Activated CD4-positive, alpha-beta T cell treated with anti-CD3 and anti-CD28 coated beads for 36 hours (primary cell): ENCODE measurements at regions of chr9 and their contacts with region 1.

Region 1: GRCh38 chr9:70924895-70925547 is 196.4 kb downstream of the TRPM3 start:
- DNase-seq: peak; percentile 24
- ATAC-seq: peak; percentile 66
- H3K4me3 Mint-ChIP-seq: no peak overlapping the region
- H3K27ac Mint-ChIP-seq: no peak overlapping the region
- H3K4me1 Mint-ChIP-seq: no peaks in the 10 kb centered on the region
- H3K27me3 Mint-ChIP-seq: no peaks in the 10 kb centered on the region

Region 2: GRCh38 chr9:71001780-71002386 is 76.9 kb after region 1 on chr9:
- CTCF ChIA-PET with region 1: no interaction called
- POLR2A ChIA-PET with region 1: no interaction called
- intact Hi-C with region 1: loop called (anchors 1 to 5 kb)
- DNase-seq: peak; percentile 31
- ATAC-seq: no peak
- H3K4me3 Mint-ChIP-seq: no peak overlapping the region
- H3K27ac Mint-ChIP-seq: no peak overlapping the region
- H3K4me1 Mint-ChIP-seq: no peaks in the 10 kb centered on the region
- H3K27me3 Mint-ChIP-seq: peaks cover 3% of the 10 kb centered on the region

Region 3: GRCh38 chr9:71249729-71250317 is 324.8 kb after region 1 on chr9:
- CTCF ChIA-PET with region 1: interaction called, 3 read pairs
- POLR2A ChIA-PET with region 1: no interaction called
- intact Hi-C with region 1: loop called (anchors 1 kb)
- DNase-seq: no peak
- ATAC-seq: no peak
- H3K4me3 Mint-ChIP-seq: no peak overlapping the region
- H3K27ac Mint-ChIP-seq: no peak overlapping the region
- H3K4me1 Mint-ChIP-seq: no peaks in the 10 kb centered on the region
- H3K27me3 Mint-ChIP-seq: peaks cover 6% of the 10 kb centered on the region

Region 4: DNA sequence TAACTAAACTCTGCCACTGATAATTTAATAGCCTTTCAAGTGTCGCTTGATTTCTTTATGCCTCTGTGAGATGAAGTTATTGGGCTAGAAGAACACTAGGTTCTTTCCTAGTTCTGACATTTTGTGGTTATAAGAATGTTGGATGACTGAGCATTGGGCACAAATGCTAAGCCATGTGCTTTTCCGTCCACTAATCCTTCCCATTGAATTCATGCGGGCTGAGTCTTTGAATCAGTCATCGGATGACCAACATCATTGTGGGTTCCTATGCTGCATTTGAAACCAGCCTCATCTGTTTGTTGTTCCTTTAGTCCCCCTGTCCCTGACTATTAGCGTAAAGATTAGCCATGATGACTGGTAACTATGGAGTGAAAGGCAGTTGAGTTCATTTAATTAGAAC is 1969.3 kb after region 1 on chr9:
- CTCF ChIA-PET with region 1: no interaction called
- POLR2A ChIA-PET with region 1: no interaction called
- intact Hi-C with region 1: no loop called
- DNase-seq: no peak
- ATAC-seq: no peak
- H3K4me3 Mint-ChIP-seq: no peak overlapping the region
- H3K27ac Mint-ChIP-seq: no peak overlapping the region
- H3K4me1 Mint-ChIP-seq: no peaks in the 10 kb centered on the region
- H3K27me3 Mint-ChIP-seq: peaks cover 15% of the 10 kb centered on the region